ENCODE measurements at regions of chr4 and their contacts with region 1.

Region 1: DNA sequence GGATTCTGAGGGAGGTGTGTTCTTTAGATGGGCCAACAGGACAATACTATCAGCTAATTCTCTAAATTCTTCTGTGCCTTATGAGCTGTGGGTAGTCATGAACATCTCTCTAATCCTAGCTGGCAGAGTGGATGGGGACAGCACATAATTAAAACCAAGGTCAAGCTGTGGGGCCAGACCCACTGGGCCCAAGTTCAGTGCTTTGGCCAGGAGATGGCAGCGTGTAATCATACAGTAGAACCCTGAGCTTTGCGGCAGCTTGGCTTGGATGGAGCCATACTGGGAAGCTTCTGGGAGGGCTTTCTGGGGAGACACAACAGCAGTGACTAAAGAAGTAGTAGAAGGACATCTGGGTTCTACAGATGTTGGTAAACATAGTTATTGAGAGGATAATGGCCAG is 140.3 kb upstream of the CXCL13 start:
- DNase-seq: peak; percentile 62
- H3K4me3 Mint-ChIP-seq: no peak overlapping the region
- H3K27ac Mint-ChIP-seq: no peak overlapping the region
- H3K4me1 Mint-ChIP-seq: no peaks in the 10 kb centered on the region
- H3K27me3 Mint-ChIP-seq: peaks cover 9% of the 10 kb centered on the region

Region 2: GRCh38 chr4:77082886-77083608 is 382.2 kb before region 1 on chr4:
- CTCF ChIA-PET with region 1: no interaction called
- intact Hi-C with region 1: no loop called
- DNase-seq: no peak
- H3K4me3 Mint-ChIP-seq: no peak overlapping the region
- H3K27ac Mint-ChIP-seq: no peak overlapping the region
- H3K4me1 Mint-ChIP-seq: peaks cover 21% of the 10 kb centered on the region
- H3K27me3 Mint-ChIP-seq: no peaks in the 10 kb centered on the region

Region 3: GRCh38 chr4:77618383-77619122 is 153.3 kb after region 1 on chr4:
- CTCF ChIA-PET with region 1: interaction called, 77 read pairs
- intact Hi-C with region 1: loop called (anchors 1 kb)
- DNase-seq: peak; percentile 81
- H3K4me3 Mint-ChIP-seq: no peak overlapping the region
- H3K27ac Mint-ChIP-seq: no peak overlapping the region
- H3K4me1 Mint-ChIP-seq: peaks cover 2% of the 10 kb centered on the region
- H3K27me3 Mint-ChIP-seq: peaks cover 12% of the 10 kb centered on the region

Measured in activated naive CD4-positive, alpha-beta T cell treated with anti-CD3 and anti-CD28 coated beads for 36 hours (primary cell).